Aorta (tissue), 5 donors: ENCODE measurements at regions of chr6 and their contacts with region 1.

Region 1: GRCh38 chr6:166598441-166599138 is 12.1 kb upstream of the RAMACL start:
- DNase-seq: peak in 1 of 2 donors; percentile 81
- ATAC-seq: peak; percentile 78
- H3K4me3 ChIP-seq: no peak overlapping the region
- H3K27ac ChIP-seq: peak overlapping the region in 1 of 2 donors; percentile 58
- H3K4me1 ChIP-seq: no peaks in the 10 kb centered on the region
- H3K27me3 ChIP-seq: no peaks in the 10 kb centered on the region

Region 2: GRCh38 chr6:166556871-166557322 is 41.7 kb before region 1 on chr6:
- intact Hi-C with region 1: loop called in 1 of 2 experiments (anchors 5 kb)
- DNase-seq: peak; percentile 94 to 96
- ATAC-seq: peak; percentile 94
- H3K4me3 ChIP-seq: no peak overlapping the region
- H3K27ac ChIP-seq: peak overlapping the region in 1 of 2 donors; percentile 9
- H3K4me1 ChIP-seq: peaks cover 0 to 4% of the 10 kb centered on the region in 2 donors
- H3K27me3 ChIP-seq: no peaks in the 10 kb centered on the region